ENCODE measurements at regions of chr11 and their contacts with region 1.

Region 1: DNA sequence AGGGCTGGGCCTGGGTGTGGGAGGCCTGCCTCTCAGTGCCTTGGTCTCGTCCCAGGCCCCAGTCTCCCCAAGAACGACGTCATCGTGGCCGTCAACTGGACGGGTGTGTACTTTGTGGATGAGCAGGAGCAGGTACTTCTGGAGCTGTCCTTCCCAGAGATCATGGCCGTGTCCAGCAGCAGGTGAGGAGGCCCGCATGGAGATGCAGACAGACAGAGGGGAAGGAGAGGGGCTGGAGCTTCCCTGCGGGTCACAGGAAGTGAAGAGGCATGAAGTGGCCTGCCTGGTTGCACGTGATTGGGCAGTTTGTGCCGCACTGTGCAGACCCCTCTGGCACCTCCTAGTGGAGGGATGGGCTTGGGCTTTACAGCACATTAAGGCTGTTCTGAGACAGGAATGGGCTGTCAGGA is 70.4 kb downstream of the MYO7A start:
- DNase-seq: peak; percentile 10
- ATAC-seq: no peak
- H3K4me3 ChIP-seq: no peak overlapping the region
- H3K27ac ChIP-seq: no peak overlapping the region
- H3K4me1 ChIP-seq: no peaks in the 10 kb centered on the region
- H3K27me3 ChIP-seq: no peaks in the 10 kb centered on the region; the same call in 1 of the 2 replicates
- CTCF ChIP-seq: peak; percentile 22; the same call in 1 of the 2 replicates
- POLR2A ChIP-seq: no peak
- RAD21 ChIP-seq: no peak

Region 2: DNA sequence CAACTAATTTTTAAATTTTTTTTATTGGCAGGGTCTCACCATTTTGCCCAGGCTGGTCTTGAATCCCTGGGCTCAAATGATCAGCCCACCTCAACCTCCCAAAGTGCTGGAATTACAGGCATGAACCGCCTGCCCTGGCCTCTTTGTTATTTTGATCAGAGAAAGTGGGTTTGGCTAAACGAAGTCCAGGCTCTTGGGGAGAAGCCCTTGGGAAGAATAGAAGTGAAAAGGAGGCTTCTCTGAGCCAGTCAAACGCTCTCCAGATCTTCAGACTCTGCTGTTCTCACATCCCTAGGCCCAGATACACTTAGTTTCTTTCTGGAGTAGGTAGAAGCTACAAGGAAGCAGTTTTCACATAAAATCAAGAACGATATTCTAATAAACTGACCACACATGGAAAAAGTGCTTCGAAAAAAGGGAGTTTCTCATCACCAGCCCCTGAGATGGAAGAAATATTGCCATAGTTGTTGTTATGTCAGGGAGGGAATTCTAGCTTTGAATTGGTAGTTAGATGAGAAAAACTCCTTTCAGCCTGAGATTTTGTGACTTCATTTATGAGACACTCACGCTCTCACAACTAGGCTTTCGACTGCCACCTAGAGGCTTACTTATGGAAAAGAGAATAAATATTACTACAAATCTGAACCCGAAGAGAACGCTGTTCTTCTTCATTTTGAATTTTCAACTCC is 349.6 kb after region 1 on chr11:
- CTCF ChIA-PET with region 1: interaction called, 17 read pairs
- POLR2A ChIA-PET with region 1: interaction called, 3 read pairs
- dilution Hi-C with region 1: no loop called
- in situ Hi-C with region 1: loop called (anchors 5 kb)
- intact Hi-C with region 1: loop called (anchors 1 kb)
- DNase-seq: peak; percentile 79
- ATAC-seq: peak; percentile 83
- H3K4me3 ChIP-seq: no peak overlapping the region
- H3K27ac ChIP-seq: no peak overlapping the region
- H3K4me1 ChIP-seq: no peaks in the 10 kb centered on the region; the same call in 1 of the 2 replicates
- H3K27me3 ChIP-seq: no peaks in the 10 kb centered on the region
- CTCF ChIP-seq: peak; percentile 84
- POLR2A ChIP-seq: no peak
- RAD21 ChIP-seq: peak; percentile 85

Measured in IMR-90 (cell line).